Activated B cell treated with CpG ODN at 0.5 μM for 24 hours (primary cell): ENCODE measurements at regions of chr11 and their contacts with region 1.

Region 1: DNA sequence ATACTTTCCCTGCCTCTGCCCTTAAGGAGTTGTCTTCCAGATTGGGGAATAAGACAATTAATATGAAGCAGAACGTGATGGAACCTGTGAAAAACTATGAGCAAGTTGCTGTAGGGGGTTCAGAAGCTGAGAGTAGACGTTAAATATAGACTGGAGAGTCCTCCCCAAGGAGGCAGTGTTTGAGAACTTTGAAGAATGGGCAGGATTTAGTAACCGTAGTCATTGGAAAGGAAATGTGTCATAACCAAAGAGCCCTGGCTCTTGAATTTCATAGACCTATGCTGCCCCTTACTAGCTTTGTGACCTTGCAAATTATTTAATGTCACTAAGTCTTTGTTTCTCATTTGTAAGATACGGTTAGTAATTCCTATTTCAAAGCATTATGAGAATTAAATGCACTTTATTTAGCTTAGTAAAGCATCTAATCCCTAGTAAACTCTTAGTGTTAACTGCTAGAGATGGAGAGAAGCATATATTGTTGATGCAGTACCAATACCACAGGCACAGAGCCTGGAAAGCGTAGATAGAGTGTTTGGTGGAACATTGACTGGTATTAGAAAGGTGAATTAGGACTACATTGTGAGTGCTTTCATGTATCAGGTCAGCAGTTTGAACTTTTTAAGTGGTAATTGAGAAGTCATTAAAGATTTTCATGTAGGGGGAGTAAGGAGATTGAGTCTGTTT is 54.1 kb downstream of the MCAM start:
- DNase-seq: no peak
- ATAC-seq: no peak
- H3K4me3 Mint-ChIP-seq: no peak overlapping the region
- H3K27ac Mint-ChIP-seq: no peak overlapping the region
- H3K4me1 Mint-ChIP-seq: peaks cover 48% of the 10 kb centered on the region
- H3K27me3 Mint-ChIP-seq: no peaks in the 10 kb centered on the region
- CTCF ChIP-seq: no peak

Region 2: DNA sequence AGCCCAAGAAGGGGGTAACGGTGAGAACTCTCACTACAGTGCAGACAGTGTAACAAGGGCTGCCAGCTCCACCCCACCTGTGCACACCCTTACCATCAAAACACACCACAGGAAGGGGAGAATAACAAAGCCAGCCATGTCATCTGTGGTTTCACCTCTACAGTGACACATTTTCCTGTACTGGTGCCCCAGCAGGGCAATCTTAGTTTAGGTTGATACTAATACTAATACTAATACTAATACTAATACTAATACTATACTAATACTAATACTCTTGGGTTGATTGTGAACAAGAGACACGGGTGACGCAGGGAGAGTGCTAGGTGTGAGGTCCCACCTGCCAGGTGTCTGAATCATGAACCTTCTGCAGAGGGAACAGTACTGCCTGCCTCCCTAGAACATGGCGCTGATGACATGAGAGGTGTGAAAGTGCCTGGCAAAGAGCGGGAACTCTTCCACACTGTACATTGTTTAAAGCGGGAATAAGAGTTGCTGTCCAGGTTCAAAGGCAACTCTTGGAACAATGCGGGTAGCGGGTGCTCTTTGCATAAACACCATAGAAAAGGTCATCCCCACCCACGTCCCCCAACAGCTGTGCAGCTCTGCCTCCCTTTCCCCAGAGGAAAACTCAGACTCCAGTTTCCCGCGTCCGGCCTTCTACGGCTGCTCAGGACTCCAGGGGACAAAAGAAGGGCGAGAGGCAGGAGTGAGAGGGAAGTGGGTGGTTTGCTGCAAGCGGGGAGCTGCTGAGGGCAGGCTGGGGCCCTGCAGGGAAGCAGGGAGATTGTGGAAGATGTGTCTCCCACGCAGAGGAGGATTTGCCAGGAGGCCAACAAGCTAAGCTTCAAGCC is 1211.0 kb before region 1 on chr11:
- CTCF ChIA-PET with region 1: no interaction called
- POLR2A ChIA-PET with region 1: no interaction called
- intact Hi-C with region 1: no loop called
- DNase-seq: no peak
- ATAC-seq: peak; percentile 77
- H3K4me3 Mint-ChIP-seq: peak overlapping the region; percentile 5
- H3K27ac Mint-ChIP-seq: peak overlapping the region; percentile 70
- H3K4me1 Mint-ChIP-seq: peaks cover 44% of the 10 kb centered on the region
- H3K27me3 Mint-ChIP-seq: no peaks in the 10 kb centered on the region
- CTCF ChIP-seq: no peak

Region 3: GRCh38 chr11:119030329-119031049 is 232.3 kb before region 1 on chr11 and contains the start of gene SLC37A4:
- CTCF ChIA-PET with region 1: no interaction called
- POLR2A ChIA-PET with region 1: no interaction called
- intact Hi-C with region 1: no loop called
- DNase-seq: peak; percentile 99
- ATAC-seq: peak; percentile 95
- H3K4me3 Mint-ChIP-seq: peak within 1 kb of the TSS; percentile 85
- H3K27ac Mint-ChIP-seq: peak within 1 kb of the TSS; percentile 61
- H3K4me1 Mint-ChIP-seq: peaks cover 15% of the 10 kb centered on the region
- H3K27me3 Mint-ChIP-seq: no peaks in the 10 kb centered on the region
- CTCF ChIP-seq: no peak
- total RNA-seq, gene SLC37A4: 12.0 and 12.1 TPM in 2 replicates

Region 4: DNA sequence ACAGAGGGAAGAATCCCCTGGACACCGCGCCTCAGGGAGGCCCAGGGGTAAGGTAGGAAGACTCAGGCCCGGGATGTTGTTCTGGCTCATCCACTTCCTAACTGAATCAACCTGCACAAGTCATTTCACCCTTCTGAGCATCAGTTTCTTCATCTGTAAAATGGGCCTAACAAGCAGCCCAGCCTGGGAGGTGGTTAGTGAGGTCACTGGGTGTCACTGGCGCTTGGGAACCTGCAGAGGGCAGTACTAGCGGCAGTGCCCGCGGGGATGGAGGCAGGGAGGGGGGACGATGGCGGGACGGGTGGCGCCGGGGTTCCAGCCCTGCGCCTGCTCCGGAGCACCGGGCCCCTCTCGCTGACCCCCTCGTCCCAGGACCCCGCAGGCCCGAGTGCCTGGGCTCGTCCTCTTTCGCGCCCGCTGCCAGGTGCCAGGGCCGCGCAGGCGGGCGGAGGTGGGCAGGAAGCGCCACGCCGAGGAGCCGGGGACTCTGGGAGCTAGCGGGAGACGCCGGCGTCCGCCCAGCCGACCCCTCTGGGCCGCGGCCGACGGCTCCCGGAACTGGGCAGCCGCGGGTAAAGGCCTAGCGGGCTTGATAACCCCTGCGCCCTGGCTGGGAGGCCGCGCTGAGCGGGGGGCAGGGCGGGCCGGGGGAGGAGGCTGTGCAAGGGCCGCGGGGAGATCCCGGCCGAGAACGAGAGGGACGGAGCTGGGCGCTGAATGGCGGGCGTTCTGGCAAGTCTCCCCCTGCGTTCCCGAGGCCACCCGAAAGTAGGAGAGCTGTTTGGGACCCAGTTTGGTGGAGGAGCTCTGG is 94.1 kb before region 1 on chr11 and contains the start of gene NLRX1:
- CTCF ChIA-PET with region 1: no interaction called
- POLR2A ChIA-PET with region 1: interaction called, 12 read pairs
- intact Hi-C with region 1: no loop called
- DNase-seq: peak; percentile 74
- ATAC-seq: peak; percentile 97
- H3K4me3 Mint-ChIP-seq: peak within 1 kb of the TSS; percentile 86
- H3K27ac Mint-ChIP-seq: peak within 1 kb of the TSS; percentile 50
- H3K4me1 Mint-ChIP-seq: peaks cover 5% of the 10 kb centered on the region
- H3K27me3 Mint-ChIP-seq: no peaks in the 10 kb centered on the region
- CTCF ChIP-seq: peak; percentile 69
- total RNA-seq, gene NLRX1: 9.8 TPM in 2 replicates

Region 5: GRCh38 chr11:119205574-119206510 is 57.0 kb before region 1 on chr11 and contains the start of gene CBL:
- CTCF ChIA-PET with region 1: interaction called, 7 read pairs
- POLR2A ChIA-PET with region 1: interaction called, 21 read pairs
- intact Hi-C with region 1: loop called (anchors 1 kb)
- DNase-seq: peak; percentile 95
- ATAC-seq: peak; percentile 86
- H3K4me3 Mint-ChIP-seq: peak within 1 kb of the TSS; percentile 96
- H3K27ac Mint-ChIP-seq: peak within 1 kb of the TSS; percentile 90
- H3K4me1 Mint-ChIP-seq: peaks cover 31% of the 10 kb centered on the region
- H3K27me3 Mint-ChIP-seq: no peaks in the 10 kb centered on the region
- CTCF ChIP-seq: no peak
- total RNA-seq, gene CBL: 26.2 and 27.8 TPM in 2 replicates

Region 6: DNA sequence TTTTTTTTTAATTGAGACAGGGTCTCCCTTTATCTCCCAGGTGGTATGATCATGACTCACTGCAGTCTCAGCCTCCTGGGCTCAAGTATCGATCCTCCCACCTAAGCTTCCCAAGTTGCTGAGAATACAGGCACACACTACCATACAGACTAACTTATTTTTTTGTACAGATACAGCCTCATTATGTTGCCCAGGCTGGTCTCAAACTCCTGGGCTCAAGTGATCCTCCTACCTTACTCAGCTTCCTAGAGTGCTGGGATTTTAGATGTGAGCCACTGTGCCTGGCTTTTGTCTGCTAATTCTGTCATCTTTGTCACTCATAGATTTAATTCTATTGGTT is 13.2 kb before region 1 on chr11:
- CTCF ChIA-PET with region 1: no interaction called
- POLR2A ChIA-PET with region 1: interaction called, 5 read pairs
- intact Hi-C with region 1: loop called (anchors 2 kb)
- DNase-seq: no peak
- ATAC-seq: no peak
- H3K4me3 Mint-ChIP-seq: no peak overlapping the region
- H3K27ac Mint-ChIP-seq: no peak overlapping the region
- H3K4me1 Mint-ChIP-seq: peaks cover 24% of the 10 kb centered on the region
- H3K27me3 Mint-ChIP-seq: no peaks in the 10 kb centered on the region
- CTCF ChIP-seq: no peak

Region 7: GRCh38 chr11:119422809-119423508 is 160.1 kb after region 1 on chr11 and contains the start of gene THY1:
- CTCF ChIA-PET with region 1: no interaction called
- POLR2A ChIA-PET with region 1: no interaction called
- intact Hi-C with region 1: no loop called
- DNase-seq: no peak
- ATAC-seq: no peak
- H3K4me3 Mint-ChIP-seq: peak within 1 kb of the TSS; percentile 22
- H3K27ac Mint-ChIP-seq: no peak within 1 kb of the TSS
- H3K4me1 Mint-ChIP-seq: peaks cover 17% of the 10 kb centered on the region
- H3K27me3 Mint-ChIP-seq: peaks cover 65% of the 10 kb centered on the region
- CTCF ChIP-seq: no peak
- total RNA-seq, gene THY1: not detected in 2 replicates